Lower leg skin (tissue), 4 donors: ENCODE measurements at regions of chr18 and their contacts with region 1.

Region 1: GRCh38 chr18:63131106-63131958 is 188.2 kb downstream of the BCL2 start:
- DNase-seq: peak in 1 of 2 donors; percentile 72
- H3K4me3 ChIP-seq: no peak overlapping the region
- CTCF ChIP-seq: no peak
- POLR2A ChIP-seq: no peak

Region 2: GRCh38 chr18:63320046-63320689 is 188.8 kb after region 1 on chr18:
- intact Hi-C with region 1: loop called (anchors 5 kb)
- DNase-seq: peak; percentile 89 to 96
- H3K4me3 ChIP-seq: peak overlapping the region; percentile 45
- CTCF ChIP-seq: no peak
- POLR2A ChIP-seq: no peak

Region 3: DNA sequence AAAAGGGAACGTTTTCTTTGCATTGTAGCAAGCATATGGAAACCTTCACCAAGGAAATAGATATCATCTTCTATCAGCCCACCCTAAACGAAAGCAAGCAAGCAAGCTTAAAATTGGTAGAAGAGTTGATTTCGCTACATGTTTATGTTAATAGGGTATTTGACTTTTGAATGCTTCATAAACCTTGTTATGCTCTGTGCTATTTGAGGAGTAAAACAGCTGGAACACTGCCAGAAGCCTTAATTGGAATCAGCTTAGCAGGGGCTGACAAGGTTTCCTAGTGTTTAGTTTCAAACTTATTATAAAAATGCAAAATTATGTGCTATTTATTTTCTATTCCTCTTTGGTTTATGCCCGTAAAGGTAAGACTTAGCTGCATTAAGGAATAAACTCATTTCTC is 1088.2 kb after region 1 on chr18:
- intact Hi-C with region 1: no loop called
- DNase-seq: no peak
- H3K4me3 ChIP-seq: no peak overlapping the region
- CTCF ChIP-seq: no peak
- POLR2A ChIP-seq: no peak